Naive thymus-derived CD4-positive, alpha-beta T cell (primary cell): ENCODE measurements at regions of chrX and their contacts with region 1.

Region 1: GRCh38 chrX:154397819-154398724 is at the start of gene RPL10:
- DNase-seq: peak; percentile 67 to 90 (median 86)
- ATAC-seq: peak; percentile 90
- H3K4me3 ChIP-seq: peak within 1 kb of the TSS; percentile 95
- H3K4me3 Mint-ChIP-seq: peak within 1 kb of the TSS; percentile 93 to 100 (median 98)
- H3K27ac ChIP-seq: peak within 1 kb of the TSS; percentile 97
- H3K27ac Mint-ChIP-seq: peak within 1 kb of the TSS; percentile 97 to 100 (median 99)
- H3K4me1 ChIP-seq: peaks cover 10 to 14% of the 10 kb centered on the region in 2 donors
- H3K4me1 Mint-ChIP-seq: peaks cover 6 to 22% (median 14%) of the 10 kb centered on the region in 7 donors
- H3K27me3 ChIP-seq: no peaks in the 10 kb centered on the region
- H3K27me3 Mint-ChIP-seq: peaks cover 0 to 5% (median 0%) of the 10 kb centered on the region in 5 donors
- total RNA-seq, gene RPL10: 2,926 to 5,130 (median 5,063) TPM

Region 2: GRCh38 chrX:154370882-154371770 is 26.9 kb before region 1 on chrX:
- CTCF ChIA-PET with region 1: interaction called, 3 read pairs
- POLR2A ChIA-PET with region 1: interaction called, 14 read pairs
- intact Hi-C with region 1: no loop called
- DNase-seq: peak; percentile 73 to 91 (median 89)
- ATAC-seq: peak; percentile 77
- H3K4me3 ChIP-seq: peak overlapping the region; percentile 82
- H3K4me3 Mint-ChIP-seq: peak overlapping the region; percentile 77 to 89 (median 83)
- H3K27ac ChIP-seq: peak overlapping the region; percentile 91
- H3K27ac Mint-ChIP-seq: peak overlapping the region in 7 of 9 donors; percentile 25 to 77 (median 62)
- H3K4me1 ChIP-seq: peaks cover 29 to 37% of the 10 kb centered on the region in 2 donors
- H3K4me1 Mint-ChIP-seq: peaks cover 0 to 25% (median 17%) of the 10 kb centered on the region in 7 donors
- H3K27me3 ChIP-seq: no peaks in the 10 kb centered on the region
- H3K27me3 Mint-ChIP-seq: no peaks in the 10 kb centered on the region

Region 3: DNA sequence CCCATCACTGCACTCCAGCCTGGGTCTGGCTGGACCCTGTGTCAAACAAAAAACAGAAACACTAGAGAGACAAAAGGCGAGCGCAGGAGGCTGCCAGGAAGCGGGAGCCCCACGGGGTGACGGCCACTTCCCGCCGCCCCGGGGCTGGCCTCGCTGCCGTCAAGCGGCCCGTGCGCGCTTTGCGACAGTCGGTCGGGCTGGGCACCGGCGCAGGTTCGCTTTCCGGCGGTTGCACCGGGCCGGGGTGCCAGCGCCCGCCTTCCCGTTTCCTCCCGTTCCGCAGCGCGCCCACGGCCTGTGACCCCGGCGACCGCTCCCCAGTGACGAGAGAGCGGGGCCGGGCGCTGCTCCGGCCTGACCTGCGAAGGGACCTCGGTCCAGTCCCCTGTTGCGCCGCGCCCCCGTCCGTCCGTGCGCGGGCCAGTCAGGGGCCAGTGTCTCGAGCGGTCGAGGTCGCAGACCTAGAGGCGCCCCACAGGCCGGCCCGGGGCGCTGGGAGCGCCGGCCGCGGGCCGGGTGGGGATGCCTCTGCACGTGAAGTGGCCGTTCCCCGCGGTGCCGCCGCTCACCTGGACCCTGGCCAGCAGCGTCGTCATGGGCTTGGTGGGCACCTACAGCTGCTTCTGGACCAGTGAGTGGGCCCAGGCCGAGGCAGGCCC is 13.4 kb after region 1 on chrX and contains the start of gene TAFAZZIN:
- CTCF ChIA-PET with region 1: no interaction called
- POLR2A ChIA-PET with region 1: interaction called, 77 read pairs
- intact Hi-C with region 1: loop called in 1 of 2 experiments (anchors 1 kb)
- DNase-seq: peak; percentile 48 to 79 (median 73)
- ATAC-seq: peak; percentile 83
- H3K4me3 ChIP-seq: peak within 1 kb of the TSS; percentile 67
- H3K4me3 Mint-ChIP-seq: peak within 1 kb of the TSS; percentile 85 to 97 (median 90)
- H3K27ac ChIP-seq: peak within 1 kb of the TSS; percentile 79
- H3K27ac Mint-ChIP-seq: peak within 1 kb of the TSS; percentile 90 to 97 (median 94)
- H3K4me1 ChIP-seq: peaks cover 6 to 7% of the 10 kb centered on the region in 2 donors
- H3K4me1 Mint-ChIP-seq: peaks cover 9 to 22% (median 14%) of the 10 kb centered on the region in 7 donors
- H3K27me3 ChIP-seq: no peaks in the 10 kb centered on the region
- H3K27me3 Mint-ChIP-seq: no peaks in the 10 kb centered on the region
- total RNA-seq, gene TAFAZZIN: 90.9 to 130 (median 108) TPM

Region 4: DNA sequence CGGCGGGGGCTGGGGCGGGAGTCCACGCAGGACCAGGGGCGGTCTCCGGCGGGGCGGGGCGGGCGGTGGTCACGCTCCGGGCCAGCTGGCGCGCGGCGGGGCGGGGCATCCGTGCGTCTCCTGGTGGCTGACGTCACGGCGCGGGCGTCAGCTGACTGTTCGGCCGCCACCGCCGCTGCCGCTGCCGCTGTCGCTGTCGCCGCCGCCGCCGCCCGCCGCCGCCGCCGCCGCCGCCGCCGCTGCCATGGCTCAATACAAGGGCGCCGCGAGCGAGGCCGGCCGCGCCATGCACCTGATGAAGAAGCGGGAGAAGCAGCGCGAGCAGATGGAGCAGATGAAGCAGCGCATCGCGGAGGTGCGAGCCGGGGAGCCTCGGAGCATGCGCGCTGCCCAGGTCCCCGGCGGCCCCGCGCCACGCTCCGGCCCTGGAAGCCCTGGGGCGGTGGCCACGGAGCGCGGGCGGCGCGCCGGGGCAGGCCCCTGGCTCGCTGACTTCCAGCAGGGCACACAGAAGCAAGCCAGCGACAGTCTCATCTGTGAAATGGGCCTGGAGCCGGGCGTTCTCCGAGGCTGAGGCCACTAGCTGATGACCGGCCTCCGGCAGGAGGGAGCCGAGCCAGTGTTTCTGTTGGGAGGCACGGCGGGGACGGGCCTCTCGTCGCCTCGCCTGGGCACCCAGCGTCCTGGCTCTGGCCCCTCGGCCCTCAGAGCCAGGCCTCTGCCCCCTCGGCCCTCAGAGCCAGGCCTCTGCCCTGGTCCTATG is 46.1 kb after region 1 on chrX and contains the start of gene FAM50A:
- CTCF ChIA-PET with region 1: no interaction called
- POLR2A ChIA-PET with region 1: interaction called, 17 read pairs
- intact Hi-C with region 1: loop called in 1 of 2 experiments (anchors 5 kb)
- DNase-seq: peak; percentile 38 to 81 (median 53)
- ATAC-seq: peak; percentile 91
- H3K4me3 ChIP-seq: peak within 1 kb of the TSS; percentile 55
- H3K4me3 Mint-ChIP-seq: peak within 1 kb of the TSS; percentile 53 to 84 (median 78)
- H3K27ac ChIP-seq: peak within 1 kb of the TSS; percentile 74
- H3K27ac Mint-ChIP-seq: peak within 1 kb of the TSS in 6 of 9 donors; percentile 71 to 88 (median 78)
- H3K4me1 ChIP-seq: peaks cover 6 to 14% of the 10 kb centered on the region in 2 donors
- H3K4me1 Mint-ChIP-seq: peaks cover 0 to 29% (median 10%) of the 10 kb centered on the region in 7 donors
- H3K27me3 ChIP-seq: no peaks in the 10 kb centered on the region
- H3K27me3 Mint-ChIP-seq: no peaks in the 10 kb centered on the region
- total RNA-seq, gene FAM50A: 47.2 to 76.5 (median 49.3) TPM

Region 5: DNA sequence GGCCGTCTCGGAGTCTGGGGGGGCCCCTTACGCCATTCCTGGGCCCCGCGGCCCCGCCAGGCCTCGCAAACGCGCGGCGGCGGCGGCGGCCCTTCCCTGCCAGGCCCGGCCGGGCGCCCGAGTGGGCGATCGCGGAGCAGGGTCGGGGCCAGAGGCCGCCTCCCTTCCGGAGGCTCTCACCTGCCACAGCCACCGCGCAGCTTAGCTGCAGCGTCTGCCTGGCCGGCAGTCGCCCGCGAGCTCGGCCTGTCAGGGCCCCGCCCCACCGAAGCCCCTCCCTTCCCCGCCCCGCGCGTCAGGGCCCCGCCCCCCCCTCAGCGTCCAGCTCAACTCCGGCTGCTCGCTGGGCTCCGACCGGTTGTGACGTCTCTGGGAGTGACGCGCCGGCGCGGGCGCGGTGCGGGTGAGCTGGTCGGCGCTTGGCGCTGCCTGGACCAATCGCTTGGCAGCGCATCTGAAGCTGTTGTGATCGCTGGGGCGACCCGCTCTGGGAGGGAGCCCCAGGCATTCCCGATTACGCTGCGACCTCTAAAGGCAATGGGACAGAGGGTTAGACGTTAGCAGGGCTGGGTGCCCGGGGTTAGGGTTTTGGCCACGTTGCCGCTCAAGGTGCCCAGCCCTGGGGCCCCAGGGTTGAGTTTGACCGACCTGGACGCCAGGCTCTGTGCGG is 92.5 kb after region 1 on chrX and contains the start of gene SLC10A3:
- CTCF ChIA-PET with region 1: interaction called, 4 read pairs
- POLR2A ChIA-PET with region 1: interaction called, 22 read pairs
- intact Hi-C with region 1: no loop called
- DNase-seq: peak; percentile 70 to 87 (median 77)
- ATAC-seq: peak; percentile 93
- H3K4me3 ChIP-seq: peak within 1 kb of the TSS; percentile 74
- H3K4me3 Mint-ChIP-seq: peak within 1 kb of the TSS; percentile 78 to 92 (median 88)
- H3K27ac ChIP-seq: peak within 1 kb of the TSS; percentile 90
- H3K27ac Mint-ChIP-seq: peak within 1 kb of the TSS; percentile 81 to 96 (median 91)
- H3K4me1 ChIP-seq: peaks cover 0 to under 1% of the 10 kb centered on the region in 2 donors
- H3K4me1 Mint-ChIP-seq: peaks cover 0 to 23% (median 17%) of the 10 kb centered on the region in 7 donors
- H3K27me3 ChIP-seq: no peaks in the 10 kb centered on the region
- H3K27me3 Mint-ChIP-seq: no peaks in the 10 kb centered on the region
- total RNA-seq, gene SLC10A3: 11.7 to 22.7 (median 19.0) TPM

Region 6: DNA sequence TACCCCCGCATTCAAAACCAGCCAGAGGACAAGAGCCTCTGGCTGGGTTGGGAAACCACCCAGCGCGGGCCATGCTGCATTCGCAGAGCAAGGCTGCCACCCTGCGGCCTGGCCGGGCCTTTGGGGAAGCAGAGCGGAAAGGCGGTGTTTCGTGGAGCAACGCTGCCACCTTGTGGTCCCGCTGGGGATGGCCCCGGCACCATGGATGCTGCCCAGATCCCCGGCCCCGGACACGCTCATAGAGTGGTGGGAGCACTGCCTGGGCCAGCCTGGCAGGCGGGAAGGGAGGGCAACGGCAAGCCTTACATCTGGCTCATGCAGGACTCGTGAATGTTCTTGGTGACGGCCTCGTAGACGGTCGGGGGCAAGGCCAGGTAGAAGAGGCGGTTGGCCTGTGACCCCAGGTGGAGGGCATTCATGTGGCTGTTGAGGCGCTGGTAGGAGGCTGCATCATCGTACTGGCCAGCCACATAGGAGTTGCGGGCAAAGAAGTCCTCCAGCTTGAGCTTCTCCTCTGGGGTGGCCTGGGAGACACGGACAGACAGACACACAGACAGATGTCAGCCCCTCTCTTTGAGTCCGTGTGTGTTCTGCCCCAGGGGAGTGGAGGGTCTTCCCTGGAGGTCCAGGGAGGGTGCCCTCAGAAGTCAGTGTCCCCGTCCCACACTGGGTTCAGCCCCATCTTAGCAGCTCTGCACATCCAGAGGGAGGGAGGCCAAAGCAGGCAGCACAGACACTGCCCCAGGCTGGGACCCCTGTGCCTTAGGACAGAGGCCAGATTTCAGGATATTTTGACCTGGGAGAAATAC is 137.0 kb after region 1 on chrX:
- CTCF ChIA-PET with region 1: interaction called, 4 read pairs
- POLR2A ChIA-PET with region 1: interaction called, 12 read pairs
- intact Hi-C with region 1: loop called in 1 of 2 experiments (anchors 1 kb)
- DNase-seq: peak; percentile 78 to 93 (median 87)
- ATAC-seq: peak; percentile 100
- H3K4me3 ChIP-seq: no peak overlapping the region
- H3K4me3 Mint-ChIP-seq: no peak overlapping the region
- H3K27ac ChIP-seq: peak overlapping the region; percentile 55
- H3K27ac Mint-ChIP-seq: peak overlapping the region in 5 of 9 donors; percentile 26 to 72 (median 67)
- H3K4me1 ChIP-seq: no peaks in the 10 kb centered on the region
- H3K4me1 Mint-ChIP-seq: peaks cover 0 to 13% (median 6%) of the 10 kb centered on the region in 7 donors
- H3K27me3 ChIP-seq: no peaks in the 10 kb centered on the region
- H3K27me3 Mint-ChIP-seq: no peaks in the 10 kb centered on the region

Region 7: GRCh38 chrX:154780968-154781367 is 382.9 kb after region 1 on chrX:
- CTCF ChIA-PET with region 1: no interaction called
- POLR2A ChIA-PET with region 1: no interaction called
- intact Hi-C with region 1: no loop called
- DNase-seq: no peak
- ATAC-seq: no peak
- H3K4me3 ChIP-seq: no peak overlapping the region
- H3K4me3 Mint-ChIP-seq: no peak overlapping the region
- H3K27ac ChIP-seq: no peak overlapping the region
- H3K27ac Mint-ChIP-seq: no peak overlapping the region
- H3K4me1 ChIP-seq: no peaks in the 10 kb centered on the region
- H3K4me1 Mint-ChIP-seq: peaks cover 11 to 25% (median 20%) of the 10 kb centered on the region in 7 donors
- H3K27me3 ChIP-seq: no peaks in the 10 kb centered on the region
- H3K27me3 Mint-ChIP-seq: no peaks in the 10 kb centered on the region